ENCODE measurements at regions of chr16 and their contacts with region 1.

Region 1: DNA sequence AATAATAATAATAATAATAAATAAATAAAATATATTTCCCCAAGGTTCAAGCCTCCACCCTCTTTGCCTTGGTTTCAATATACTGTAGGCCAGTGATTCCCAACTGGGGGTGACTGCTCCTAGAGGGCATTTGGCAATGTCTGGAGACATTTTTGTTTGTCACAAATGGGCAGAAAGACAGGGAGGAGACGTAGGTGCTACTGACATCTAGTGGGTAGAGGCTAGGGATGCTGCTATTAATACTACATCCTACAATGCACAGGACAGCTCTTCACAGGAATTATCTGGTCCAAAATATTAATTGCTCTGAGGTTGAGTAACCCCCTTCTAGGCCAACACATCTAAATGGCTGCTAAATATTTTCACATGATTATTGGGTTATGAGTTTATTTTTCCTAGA is 12.8 kb upstream of the PRR14 start:
- DNase-seq: peak; percentile 56
- ATAC-seq: no peak
- H3K4me3 ChIP-seq: no peak overlapping the region
- H3K4me3 Mint-ChIP-seq: no peak overlapping the region
- H3K27ac ChIP-seq: no peak overlapping the region
- H3K27ac Mint-ChIP-seq: no peak overlapping the region
- H3K4me1 ChIP-seq: peaks cover 7 to 18% of the 10 kb centered on the region in 2 donors
- H3K4me1 Mint-ChIP-seq: peaks cover 16% of the 10 kb centered on the region
- H3K27me3 ChIP-seq: no peaks in the 10 kb centered on the region
- H3K27me3 Mint-ChIP-seq: no peaks in the 10 kb centered on the region
- CTCF ChIP-seq: peak; percentile 36

Region 2: GRCh38 chr16:30650369-30651123 is 12.6 kb after region 1 on chr16 and contains the start of gene PRR14:
- CTCF ChIA-PET with region 1: interaction called, 8 read pairs
- POLR2A ChIA-PET with region 1: interaction called, 28 read pairs
- intact Hi-C with region 1: loop called (anchors 1 kb)
- DNase-seq: peak; percentile 99
- ATAC-seq: peak; percentile 76
- H3K4me3 ChIP-seq: peak within 1 kb of the TSS; percentile 62 to 100 (median 93)
- H3K4me3 Mint-ChIP-seq: peak within 1 kb of the TSS; percentile 91
- H3K27ac ChIP-seq: peak within 1 kb of the TSS; percentile 97 to 98
- H3K27ac Mint-ChIP-seq: peak within 1 kb of the TSS; percentile 96
- H3K4me1 ChIP-seq: peaks cover 9 to 21% of the 10 kb centered on the region in 2 donors
- H3K4me1 Mint-ChIP-seq: peaks cover 19% of the 10 kb centered on the region
- H3K27me3 ChIP-seq: no peaks in the 10 kb centered on the region
- H3K27me3 Mint-ChIP-seq: no peaks in the 10 kb centered on the region
- CTCF ChIP-seq: no peak
- total RNA-seq, gene PRR14: 92.7 and 95.8 TPM in 2 replicates